ENCODE measurements at regions of chr21 and their contacts with region 1.

Region 1: GRCh38 chr21:17387030-17387617 is 125.7 kb upstream of the CXADR start:
- DNase-seq: peak; percentile 16
- H3K4me3 ChIP-seq: no peak overlapping the region
- H3K27ac ChIP-seq: no peak overlapping the region
- H3K27me3 ChIP-seq: peaks cover 2% of the 10 kb centered on the region
- CTCF ChIP-seq: peak; percentile 66

Region 2: DNA sequence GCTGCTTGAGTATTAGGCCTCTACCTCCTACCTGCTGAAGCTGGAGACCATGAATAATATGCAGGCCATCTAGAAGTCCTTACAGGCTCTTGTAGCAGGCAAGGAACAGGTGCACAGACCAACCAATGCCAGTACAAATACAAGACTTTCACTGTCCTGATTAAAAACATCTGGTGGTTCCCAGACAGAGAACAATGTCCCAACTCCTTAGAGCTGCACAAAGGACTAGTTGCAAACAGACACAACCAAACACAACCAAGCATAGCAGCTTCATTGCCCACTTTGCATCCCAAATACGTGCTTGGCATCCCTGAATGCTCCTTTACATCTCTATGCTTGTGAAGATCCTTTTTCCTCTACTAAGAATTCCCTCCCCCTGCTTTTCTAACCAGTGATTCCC is 27.6 kb after region 1 on chr21:
- CTCF ChIA-PET with region 1: interaction called, 16 read pairs
- POLR2A ChIA-PET with region 1: no interaction called
- DNase-seq: no peak
- H3K4me3 ChIP-seq: no peak overlapping the region
- H3K27ac ChIP-seq: no peak overlapping the region
- H3K27me3 ChIP-seq: no peaks in the 10 kb centered on the region
- CTCF ChIP-seq: no peak

Region 3: DNA sequence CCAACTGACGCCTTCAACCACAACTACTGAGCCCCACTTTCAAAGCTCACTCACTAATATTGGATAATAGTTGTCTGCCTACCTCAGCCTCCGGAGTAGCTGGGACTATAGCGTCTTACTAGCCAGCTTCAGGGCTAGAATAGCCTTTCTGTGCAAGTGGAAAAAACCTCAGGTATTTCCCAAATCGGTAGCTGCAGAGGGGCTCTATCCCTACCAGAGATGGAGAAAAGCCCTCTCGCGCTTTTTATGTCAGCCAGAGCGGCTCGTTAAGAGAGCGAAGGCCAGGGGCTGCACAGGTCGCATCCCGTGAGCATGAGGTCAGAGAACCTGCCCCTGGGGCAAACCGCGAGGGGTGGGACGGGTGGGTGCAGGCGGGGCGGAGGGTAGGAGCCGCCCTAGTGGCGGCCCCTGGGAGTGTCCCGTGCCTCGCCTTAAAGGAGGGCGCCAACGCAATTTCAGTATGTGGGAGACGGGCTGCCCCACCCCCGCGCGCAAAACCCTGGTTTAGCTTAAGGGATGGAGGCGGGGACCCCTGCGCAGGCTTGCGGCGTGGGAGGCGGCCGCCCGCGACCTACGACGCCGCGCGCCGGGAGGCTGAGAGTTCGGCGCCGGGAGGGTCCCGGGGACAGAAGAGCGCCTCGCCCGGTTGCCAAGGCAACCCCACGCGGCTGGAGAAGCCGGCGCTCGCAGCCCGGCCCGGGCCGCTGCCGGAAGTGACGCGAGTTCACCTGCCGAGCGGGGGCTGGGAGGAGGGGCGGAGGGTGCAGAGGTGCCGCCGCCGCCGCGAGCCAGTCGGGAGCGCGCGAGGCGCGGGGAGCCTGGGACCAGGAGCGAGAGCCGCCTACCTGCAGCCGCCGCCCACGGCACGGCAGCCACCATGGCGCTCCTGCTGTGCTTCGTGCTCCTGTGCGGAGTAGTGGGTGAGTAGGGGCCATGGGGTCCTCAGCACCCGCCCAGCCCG is 125.4 kb after region 1 on chr21 and contains the start of gene CXADR:
- CTCF ChIA-PET with region 1: interaction called, 24 read pairs
- POLR2A ChIA-PET with region 1: no interaction called
- DNase-seq: no peak
- H3K4me3 ChIP-seq: peak within 1 kb of the TSS; percentile 69
- H3K27ac ChIP-seq: no peak within 1 kb of the TSS
- H3K27me3 ChIP-seq: peaks cover 15% of the 10 kb centered on the region
- CTCF ChIP-seq: peak; percentile 50
- polyA plus RNA-seq, gene CXADR: 0.67 and 0.99 TPM in 2 replicates

Region 4: DNA sequence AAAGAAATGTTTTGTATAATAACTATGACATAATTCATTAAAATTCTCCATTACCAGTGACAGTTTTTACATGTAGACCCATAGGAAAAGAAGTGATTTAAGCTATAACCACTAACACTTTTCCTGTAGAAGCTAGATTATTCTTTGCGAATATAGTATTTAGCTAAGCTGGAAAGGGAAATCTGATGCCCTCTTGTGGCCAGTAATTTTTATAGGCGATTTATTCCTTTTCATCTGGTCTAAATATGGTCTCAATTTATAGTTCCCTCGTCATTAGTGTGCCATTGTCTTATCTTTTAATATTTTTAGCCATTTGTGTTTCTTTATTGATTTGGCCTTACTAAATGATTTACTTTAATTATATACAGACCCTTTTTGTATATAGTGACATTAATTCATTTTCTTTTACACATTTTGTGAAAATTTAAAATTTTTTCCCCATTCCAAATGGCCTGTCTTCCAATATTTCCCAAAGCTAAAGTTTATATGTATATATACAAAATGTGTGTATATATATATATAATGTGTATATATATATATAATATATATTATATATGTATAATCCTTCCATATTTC is 198.8 kb after region 1 on chr21:
- CTCF ChIA-PET with region 1: interaction called, 303 read pairs
- POLR2A ChIA-PET with region 1: no interaction called
- DNase-seq: no peak
- H3K4me3 ChIP-seq: no peak overlapping the region
- H3K27ac ChIP-seq: no peak overlapping the region
- H3K27me3 ChIP-seq: no peaks in the 10 kb centered on the region
- CTCF ChIP-seq: peak; percentile 63